ENCODE measurements at regions of chr6 and their contacts with region 1.

Region 1: DNA sequence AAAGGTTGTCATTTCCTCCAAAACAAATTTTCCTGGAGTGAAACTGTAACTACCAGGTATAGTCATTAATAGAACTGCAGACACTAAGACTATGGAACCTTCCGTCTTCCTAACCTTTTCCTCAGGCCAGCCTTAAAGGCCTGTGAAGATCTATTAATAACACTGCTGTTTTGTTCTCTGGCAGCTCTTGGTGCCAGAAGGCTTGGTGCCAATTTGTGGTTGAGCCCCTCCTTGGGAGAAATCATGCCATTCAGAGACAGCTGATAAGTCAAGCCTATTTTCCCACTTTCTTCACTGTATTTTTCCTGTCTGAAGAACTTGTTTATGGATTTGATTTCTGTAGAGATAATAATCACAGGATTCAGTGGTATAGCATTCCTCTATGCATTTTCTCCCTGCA is 64.8 kb downstream of the HCRTR2 start:
- DNase-seq: no peak
- ATAC-seq: no peak

Region 2: GRCh38 chr6:53979468-53980067 is 1259.5 kb before region 1 on chr6:
- intact Hi-C with region 1: loop called (anchors 5 kb)
- DNase-seq: no peak
- ATAC-seq: no peak

Region 3: DNA sequence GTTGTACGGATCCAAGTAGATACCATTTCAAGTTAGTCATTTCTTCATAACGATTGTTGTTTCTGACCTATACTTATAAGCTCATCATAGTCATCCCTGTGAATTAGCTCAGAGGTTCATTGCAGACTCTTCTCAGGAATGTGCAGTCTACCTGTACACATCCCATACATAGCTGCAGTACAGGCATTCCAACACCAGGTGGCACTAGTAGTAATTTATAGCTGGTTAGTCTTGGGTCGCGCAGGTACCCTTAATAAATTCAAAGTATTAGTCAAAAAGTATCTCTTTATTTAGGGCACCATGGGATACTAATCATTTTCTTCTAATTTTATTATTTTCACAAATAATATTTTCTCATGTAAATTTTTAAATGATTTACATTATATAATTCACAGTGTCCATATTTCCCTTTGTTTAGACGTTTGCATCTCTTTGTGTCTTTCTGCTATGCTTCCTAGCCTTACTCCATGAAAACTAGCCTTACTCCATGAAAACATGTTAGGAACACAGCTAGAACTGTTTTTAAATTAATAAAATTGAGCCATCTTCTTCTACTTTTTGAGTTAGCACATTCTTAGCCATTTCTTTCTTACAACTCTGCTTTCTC is 521.1 kb before region 1 on chr6:
- intact Hi-C with region 1: loop called (anchors 5 kb)
- DNase-seq: no peak
- ATAC-seq: no peak

Measured in Right ventricle myocardium inferior (tissue), 1 donor.